Sigmoid colon (tissue), 7 donors: ENCODE measurements at regions of chr17 and their contacts with region 1.

Region 1: DNA sequence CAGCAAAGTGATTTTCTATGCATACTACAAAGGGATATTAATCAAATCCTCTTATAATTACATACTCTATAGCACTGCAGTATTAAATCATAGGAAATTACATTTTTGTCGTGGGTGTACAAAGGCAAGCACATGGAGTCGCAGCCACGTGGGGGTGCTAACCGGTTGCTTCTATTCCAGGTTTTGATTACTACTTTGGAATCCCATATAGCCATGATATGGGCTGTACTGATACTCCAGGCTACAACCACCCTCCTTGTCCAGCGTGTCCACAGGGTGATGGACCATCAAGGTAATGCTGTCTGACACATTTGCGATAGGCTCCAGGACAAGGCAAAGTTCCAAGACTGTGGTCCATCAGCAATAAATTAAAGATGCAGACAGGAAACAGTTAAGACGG is 60.1 kb downstream of the ARSG start:
- DNase-seq: no peak
- H3K4me3 ChIP-seq: no peak overlapping the region
- H3K27ac ChIP-seq: no peak overlapping the region
- H3K4me1 ChIP-seq: no peaks in the 10 kb centered on the region
- H3K27me3 ChIP-seq: no peaks in the 10 kb centered on the region
- CTCF ChIP-seq: no peak
- EP300 ChIP-seq: no peak
- POLR2A ChIP-seq: no peak

Region 2: DNA sequence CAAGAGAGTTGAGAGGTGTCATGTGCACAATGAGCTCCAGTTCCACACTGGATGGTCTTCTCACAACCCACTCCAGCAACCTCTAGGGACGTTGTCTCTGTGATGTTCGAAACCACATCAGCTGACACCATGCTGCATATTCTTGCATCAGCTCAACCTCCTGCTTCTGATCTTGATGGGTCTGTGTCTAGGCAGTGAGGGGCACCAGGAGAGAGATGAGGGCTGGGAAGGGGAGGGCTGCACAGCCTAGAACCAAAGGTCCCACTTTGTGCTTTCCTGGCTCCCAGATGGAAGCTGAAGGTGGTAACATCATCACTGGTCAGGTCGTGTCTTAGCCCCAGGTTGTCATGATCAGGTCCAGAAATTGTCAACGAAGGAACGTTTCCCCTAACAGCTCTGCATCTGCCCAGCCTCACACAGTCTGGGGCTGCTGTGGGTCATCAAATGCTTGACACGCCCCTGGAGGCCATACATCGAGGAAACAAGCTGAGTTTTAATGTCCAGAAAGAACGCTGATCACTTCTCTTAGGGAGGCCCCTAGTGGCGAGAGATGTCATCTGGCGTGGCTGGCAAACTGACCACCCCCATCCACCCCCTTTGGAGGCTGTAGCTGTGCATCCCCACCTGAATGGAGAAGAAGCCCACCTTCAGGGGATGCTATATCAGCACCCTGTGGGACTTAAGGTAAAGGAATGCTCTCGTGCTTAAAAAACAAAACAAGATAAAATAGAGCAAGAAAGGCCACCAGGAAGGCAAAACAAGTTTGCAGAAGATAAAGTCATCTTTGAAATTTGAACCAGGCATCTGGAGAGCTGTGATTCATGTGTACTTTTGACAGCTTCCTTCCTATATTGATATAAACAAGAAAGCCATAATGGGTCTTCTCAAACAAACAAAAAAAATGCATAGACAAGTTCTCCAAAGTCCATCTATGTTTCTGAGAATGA is 47.6 kb after region 1 on chr17:
- intact Hi-C with region 1: loop called (anchors 5 kb)
- DNase-seq: peak; percentile 70
- H3K4me3 ChIP-seq: no peak overlapping the region
- H3K27ac ChIP-seq: peak overlapping the region in 1 of 4 donors; percentile 18
- H3K4me1 ChIP-seq: no peaks in the 10 kb centered on the region
- H3K27me3 ChIP-seq: no peaks in the 10 kb centered on the region
- CTCF ChIP-seq: peak; percentile 14 to 59 (median 46)
- EP300 ChIP-seq: no peak
- POLR2A ChIP-seq: no peak